ENCODE measurements at regions of chr1 and their contacts with region 1.

Region 1: GRCh38 chr1:62407405-62408009 is 29.3 kb upstream of the USP1 start:
- DNase-seq: peak; percentile 33
- ATAC-seq: peak; percentile 81
- H3K4me3 ChIP-seq: no peak overlapping the region
- H3K27ac ChIP-seq: no peak overlapping the region
- H3K4me1 ChIP-seq: no peaks in the 10 kb centered on the region
- H3K27me3 ChIP-seq: no peaks in the 10 kb centered on the region
- CTCF ChIP-seq: peak; percentile 63 to 91 (median 86)
- POLR2A ChIP-seq: no peak
- RAD21 ChIP-seq: peak; percentile 90

Region 2: GRCh38 chr1:61825393-61825792 is 582.1 kb before region 1 on chr1:
- CTCF ChIA-PET with region 1: no interaction called
- POLR2A ChIA-PET with region 1: no interaction called
- RAD21 ChIA-PET with region 1: no interaction called
- intact Hi-C with region 1: no loop called
- DNase-seq: no peak
- ATAC-seq: no peak
- H3K4me3 ChIP-seq: no peak overlapping the region
- H3K27ac ChIP-seq: no peak overlapping the region
- H3K4me1 ChIP-seq: no peaks in the 10 kb centered on the region
- H3K27me3 ChIP-seq: no peaks in the 10 kb centered on the region
- CTCF ChIP-seq: no peak
- POLR2A ChIP-seq: no peak
- RAD21 ChIP-seq: no peak

Region 3: DNA sequence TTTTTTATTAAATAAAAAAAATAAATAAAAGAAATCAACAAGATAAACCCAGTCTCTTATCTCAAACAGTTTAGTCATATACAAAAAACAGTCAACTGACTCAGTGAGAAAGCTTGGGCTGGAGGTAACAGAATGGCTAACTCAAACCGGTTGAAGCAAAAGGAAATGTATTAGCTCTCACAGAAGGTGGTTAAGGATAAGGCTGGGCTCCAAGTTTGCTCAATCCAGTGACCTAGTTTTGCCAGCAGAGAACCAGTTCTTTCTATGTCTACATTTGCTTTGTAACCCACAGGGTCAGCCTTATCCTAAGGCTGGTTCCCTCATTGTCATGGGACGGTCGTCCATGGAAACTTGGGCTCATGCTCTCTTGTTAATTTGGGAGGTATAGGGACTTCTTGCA is 357.3 kb before region 1 on chr1:
- CTCF ChIA-PET with region 1: no interaction called
- POLR2A ChIA-PET with region 1: no interaction called
- RAD21 ChIA-PET with region 1: no interaction called
- intact Hi-C with region 1: no loop called
- DNase-seq: no peak
- ATAC-seq: no peak
- H3K4me3 ChIP-seq: no peak overlapping the region
- H3K27ac ChIP-seq: no peak overlapping the region
- H3K4me1 ChIP-seq: peaks cover 0 to 4% of the 10 kb centered on the region in 2 experiments; a peak in 2 of 4 replicates
- H3K27me3 ChIP-seq: no peaks in the 10 kb centered on the region
- CTCF ChIP-seq: no peak
- POLR2A ChIP-seq: no peak
- RAD21 ChIP-seq: no peak

Region 4: DNA sequence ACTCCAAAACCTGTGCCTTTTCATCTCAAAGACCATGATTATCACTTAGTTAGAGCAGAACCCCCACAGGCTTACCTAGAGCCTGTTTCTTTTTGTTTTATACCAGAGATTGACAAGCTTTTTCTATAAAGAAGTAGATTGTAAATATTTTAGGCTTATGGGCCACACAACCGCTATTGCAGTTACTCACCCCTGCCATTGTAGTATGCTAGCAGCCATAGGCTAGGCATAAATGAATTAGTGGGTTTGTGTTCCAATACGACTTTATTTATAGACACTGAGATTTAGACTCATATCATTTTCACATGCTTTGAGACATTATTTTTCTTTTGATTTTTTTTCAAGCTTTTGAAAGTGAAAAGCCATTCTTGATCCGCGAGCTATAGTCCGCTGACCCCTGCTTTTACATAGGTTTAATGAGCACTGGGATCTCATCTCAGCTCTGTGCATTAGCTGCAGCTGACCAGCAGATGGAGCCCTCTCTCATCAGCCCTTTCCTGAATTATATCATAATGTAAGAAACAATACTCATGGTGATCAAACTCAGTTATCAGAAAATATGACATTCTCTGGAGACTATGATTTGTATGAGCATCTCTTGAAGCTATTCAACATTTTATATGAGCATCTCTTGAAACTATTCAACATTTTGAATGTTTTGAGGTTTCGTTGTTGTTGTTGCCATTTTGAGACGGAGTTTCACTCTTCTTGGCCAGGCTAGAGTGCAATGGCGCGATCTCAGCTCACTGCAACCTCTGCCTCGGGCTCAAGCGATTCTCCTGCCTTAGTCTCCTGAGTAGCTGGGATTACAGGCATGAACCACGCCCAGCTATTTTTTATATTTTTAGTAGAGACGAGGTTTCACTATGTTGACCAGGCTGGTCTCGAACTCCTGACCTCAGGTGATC is 324.8 kb before region 1 on chr1:
- CTCF ChIA-PET with region 1: no interaction called
- POLR2A ChIA-PET with region 1: no interaction called
- RAD21 ChIA-PET with region 1: no interaction called
- intact Hi-C with region 1: loop called (anchors 1 kb)
- DNase-seq: no peak
- ATAC-seq: peak; percentile 91
- H3K4me3 ChIP-seq: no peak overlapping the region
- H3K27ac ChIP-seq: no peak overlapping the region
- H3K4me1 ChIP-seq: no peaks in the 10 kb centered on the region
- H3K27me3 ChIP-seq: no peaks in the 10 kb centered on the region
- CTCF ChIP-seq: peak; percentile 64 to 97 (median 95); a peak in 5 of 6 replicates
- POLR2A ChIP-seq: no peak
- RAD21 ChIP-seq: peak; percentile 57

Region 5: DNA sequence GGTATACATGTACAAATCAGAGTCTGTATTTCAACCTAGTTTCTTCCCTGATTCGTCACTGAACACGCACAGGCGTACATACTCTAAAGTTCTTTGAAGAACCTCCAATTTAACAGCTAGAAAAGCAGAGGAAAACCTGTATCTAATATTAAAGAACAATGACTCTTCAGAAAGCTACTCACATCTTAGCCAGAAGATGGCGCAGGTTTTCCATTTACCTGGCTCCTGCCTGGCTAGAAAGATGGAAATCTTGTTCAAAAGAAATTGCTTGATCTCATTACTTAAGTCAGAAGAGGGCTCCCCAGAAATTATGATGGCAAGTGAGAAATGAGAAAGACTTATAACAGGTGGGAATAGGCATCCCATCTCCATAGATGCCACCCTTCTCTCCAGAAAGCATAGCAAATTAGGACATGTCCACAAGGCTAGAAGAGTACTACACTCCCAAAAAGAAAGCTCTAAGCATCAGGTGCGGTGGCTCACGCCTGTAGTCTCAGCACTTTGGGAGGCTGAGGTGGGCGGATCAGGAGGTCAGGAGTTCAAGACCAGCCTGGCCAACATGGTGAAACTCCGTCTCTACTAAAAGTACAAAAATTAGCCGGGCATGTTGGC is 231.8 kb before region 1 on chr1:
- CTCF ChIA-PET with region 1: interaction called, 84 read pairs
- POLR2A ChIA-PET with region 1: interaction called, 3 read pairs
- RAD21 ChIA-PET with region 1: interaction called, 4 to 5 read pairs
- intact Hi-C with region 1: loop called (anchors 1 kb)
- DNase-seq: peak; percentile 26
- ATAC-seq: peak; percentile 81
- H3K4me3 ChIP-seq: no peak overlapping the region
- H3K27ac ChIP-seq: no peak overlapping the region
- H3K4me1 ChIP-seq: no peaks in the 10 kb centered on the region
- H3K27me3 ChIP-seq: no peaks in the 10 kb centered on the region
- CTCF ChIP-seq: peak; percentile 65 to 94 (median 83)
- POLR2A ChIP-seq: no peak
- RAD21 ChIP-seq: peak; percentile 96

Region 6: DNA sequence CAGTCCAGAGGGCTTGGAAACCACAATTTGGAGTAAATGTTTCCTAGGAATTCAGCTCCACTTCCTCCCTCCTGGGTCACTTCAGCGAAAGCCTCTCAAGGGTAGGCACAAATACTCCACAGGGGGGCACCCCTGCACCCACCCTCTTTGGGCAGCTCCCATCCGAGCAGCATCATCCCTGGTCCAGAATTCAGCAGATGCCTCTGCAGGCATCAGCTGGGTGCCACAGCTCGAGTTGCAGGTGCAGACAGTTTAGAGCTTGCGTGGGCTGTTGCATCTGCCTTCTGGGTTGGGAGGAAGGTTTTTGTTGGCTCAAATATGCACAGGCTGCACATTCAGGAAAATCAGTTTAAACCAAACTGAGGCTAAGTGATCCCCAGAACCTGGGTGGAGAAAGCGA is 113.2 kb before region 1 on chr1:
- CTCF ChIA-PET with region 1: no interaction called
- POLR2A ChIA-PET with region 1: no interaction called
- RAD21 ChIA-PET with region 1: no interaction called
- intact Hi-C with region 1: loop called (anchors 5 kb)
- DNase-seq: peak; percentile 1
- ATAC-seq: peak; percentile 87
- H3K4me3 ChIP-seq: no peak overlapping the region
- H3K27ac ChIP-seq: no peak overlapping the region
- H3K4me1 ChIP-seq: no peaks in the 10 kb centered on the region
- H3K27me3 ChIP-seq: no peaks in the 10 kb centered on the region; the same call in 1 of the 2 replicates
- CTCF ChIP-seq: peak; percentile 31 to 36 (median 33); a peak in 4 of 6 replicates
- POLR2A ChIP-seq: no peak
- RAD21 ChIP-seq: peak; percentile 56

Region 7: DNA sequence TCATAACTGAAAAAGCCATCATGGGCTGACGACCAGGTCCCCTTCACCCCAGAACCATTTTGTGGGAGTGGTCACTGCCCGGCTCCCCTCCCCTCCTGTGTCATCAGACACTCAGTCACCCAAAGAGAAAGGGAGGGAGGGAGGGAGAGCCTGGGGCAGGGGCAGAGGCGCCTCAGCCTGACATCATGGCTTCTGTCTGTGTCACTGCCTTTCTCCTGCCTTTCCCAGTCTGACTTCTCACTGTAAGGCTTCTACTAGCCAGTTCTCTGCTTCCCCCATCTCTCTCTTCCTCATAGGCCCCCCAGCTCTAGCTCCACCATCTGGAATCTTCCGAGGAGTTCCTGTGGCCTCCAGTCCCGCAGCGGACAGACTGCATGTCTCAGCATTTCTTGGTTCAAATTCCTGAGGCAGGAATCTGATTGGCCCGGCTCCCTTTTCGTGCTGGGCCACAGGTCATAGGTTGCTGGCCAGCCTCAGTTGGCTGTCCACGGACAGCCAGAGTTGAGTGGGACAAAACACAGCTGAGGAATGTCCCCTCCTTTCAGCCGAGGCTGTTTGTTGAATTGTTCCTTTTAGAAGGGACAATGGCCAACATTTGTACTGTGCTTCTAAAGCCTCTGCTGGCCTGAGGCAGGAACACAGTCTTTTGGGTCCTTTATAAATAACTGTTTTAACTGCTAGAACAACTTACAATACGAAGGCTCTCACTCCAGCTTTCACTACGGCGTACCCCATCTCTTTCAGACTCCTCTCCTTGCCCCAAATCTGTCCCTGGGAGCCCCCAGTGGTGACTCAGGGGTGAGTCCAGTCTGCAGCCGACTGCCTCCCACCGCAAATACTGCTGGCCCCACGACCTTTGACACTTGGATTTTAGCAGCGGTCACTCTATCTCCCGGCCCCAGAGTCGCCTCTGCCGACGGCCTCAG is 69.5 kb before region 1 on chr1:
- CTCF ChIA-PET with region 1: no interaction called
- POLR2A ChIA-PET with region 1: no interaction called
- RAD21 ChIA-PET with region 1: no interaction called
- intact Hi-C with region 1: no loop called
- DNase-seq: no peak
- ATAC-seq: peak; percentile 44; the same call in 1 of the 2 replicates
- H3K4me3 ChIP-seq: no peak overlapping the region
- H3K27ac ChIP-seq: no peak overlapping the region
- H3K4me1 ChIP-seq: peaks cover 0 to 17% of the 10 kb centered on the region in 2 experiments; a peak in 2 of 4 replicates
- H3K27me3 ChIP-seq: no peaks in the 10 kb centered on the region
- CTCF ChIP-seq: no peak
- POLR2A ChIP-seq: no peak
- RAD21 ChIP-seq: no peak

Region 8: DNA sequence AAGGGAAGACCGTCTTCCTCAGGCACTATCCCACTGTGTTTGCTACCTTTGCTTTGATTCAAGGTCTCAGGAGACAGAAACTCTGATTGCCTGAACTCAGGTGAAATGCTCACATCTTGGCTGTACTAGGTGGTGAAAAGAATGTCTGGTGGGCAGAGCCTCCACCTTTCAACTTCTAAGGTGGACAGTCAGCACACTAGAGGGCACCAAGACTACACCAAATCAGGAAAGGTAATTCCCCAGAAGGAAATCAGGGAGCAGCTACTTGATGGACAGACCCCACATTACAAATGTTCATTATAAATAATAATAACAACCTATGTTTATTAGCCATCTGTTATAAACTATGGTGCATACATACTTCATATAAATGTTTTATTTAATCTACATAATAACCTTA is 597.4 kb after region 1 on chr1:
- CTCF ChIA-PET with region 1: no interaction called
- POLR2A ChIA-PET with region 1: no interaction called
- RAD21 ChIA-PET with region 1: no interaction called
- intact Hi-C with region 1: no loop called
- DNase-seq: peak; percentile 7
- ATAC-seq: peak; percentile 82
- H3K4me3 ChIP-seq: no peak overlapping the region
- H3K27ac ChIP-seq: no peak overlapping the region
- H3K4me1 ChIP-seq: no peaks in the 10 kb centered on the region
- H3K27me3 ChIP-seq: peaks cover 23% of the 10 kb centered on the region
- CTCF ChIP-seq: peak; percentile 28 to 46 (median 43); a peak in 3 of 6 replicates
- POLR2A ChIP-seq: no peak
- RAD21 ChIP-seq: peak; percentile 77

Measured in HCT116 (cell line).